Activated CD4-positive, alpha-beta T cell treated with anti-CD3 and anti-CD28 coated beads, Interleukin-2, amount 10 ng/mL, durations not matched to agents 24 days and 14 days (primary cell): ENCODE measurements at regions of chr7 and their contacts with region 1.

Region 1: GRCh38 chr7:40057292-40057691 is 77.1 kb downstream of the MPLKIP start:
- DNase-seq: no peak
- H3K4me3 Mint-ChIP-seq: no peak overlapping the region
- H3K27ac Mint-ChIP-seq: no peak overlapping the region
- H3K4me1 Mint-ChIP-seq: peaks cover 7% of the 10 kb centered on the region
- H3K27me3 Mint-ChIP-seq: no peaks in the 10 kb centered on the region

Region 2: GRCh38 chr7:39896840-39897239 is 160.5 kb before region 1 on chr7:
- intact Hi-C with region 1: loop called (anchors 1 kb)
- DNase-seq: no peak
- H3K4me3 Mint-ChIP-seq: no peak overlapping the region
- H3K27ac Mint-ChIP-seq: no peak overlapping the region
- H3K4me1 Mint-ChIP-seq: peaks cover 2% of the 10 kb centered on the region
- H3K27me3 Mint-ChIP-seq: peaks cover 32% of the 10 kb centered on the region